CD8-positive, alpha-beta memory T cell (primary cell): ENCODE measurements at regions of chr14 and their contacts with region 1.

Region 1: GRCh38 chr14:34982417-34983147 is at the start of gene SRP54:
- DNase-seq: peak; percentile 100
- H3K4me3 ChIP-seq: peak within 1 kb of the TSS; percentile 99
- H3K4me3 Mint-ChIP-seq: no peak within 1 kb of the TSS
- H3K27ac ChIP-seq: peak within 1 kb of the TSS; percentile 98
- H3K27ac Mint-ChIP-seq: no peak within 1 kb of the TSS
- H3K4me1 ChIP-seq: peaks cover 43% of the 10 kb centered on the region
- H3K4me1 Mint-ChIP-seq: peaks cover 11 to 19% (median 14%) of the 10 kb centered on the region in 3 donors
- H3K27me3 ChIP-seq: no peaks in the 10 kb centered on the region
- H3K27me3 Mint-ChIP-seq: no peaks in the 10 kb centered on the region
- total RNA-seq, gene SRP54: 76.2 to 76.5 TPM

Region 2: GRCh38 chr14:34875031-34875922 is 107.3 kb before region 1 on chr14 and contains the start of gene BAZ1A:
- CTCF ChIA-PET with region 1: interaction called, 8 read pairs
- POLR2A ChIA-PET with region 1: interaction called, 64 read pairs
- DNase-seq: peak; percentile 24 to 64 (median 52)
- H3K4me3 ChIP-seq: peak within 1 kb of the TSS; percentile 86
- H3K4me3 Mint-ChIP-seq: peak within 1 kb of the TSS; percentile 97 to 100 (median 100)
- H3K27ac ChIP-seq: peak within 1 kb of the TSS; percentile 98
- H3K27ac Mint-ChIP-seq: peak within 1 kb of the TSS; percentile 97 to 100 (median 99)
- H3K4me1 ChIP-seq: peaks cover 15% of the 10 kb centered on the region
- H3K4me1 Mint-ChIP-seq: peaks cover 27 to 44% (median 44%) of the 10 kb centered on the region in 3 donors
- H3K27me3 ChIP-seq: no peaks in the 10 kb centered on the region
- H3K27me3 Mint-ChIP-seq: no peaks in the 10 kb centered on the region
- total RNA-seq, gene BAZ1A: 67.5 to 70.5 TPM

Region 3: GRCh38 chr14:34931206-34931605 is 51.4 kb before region 1 on chr14:
- CTCF ChIA-PET with region 1: interaction called, 4 read pairs
- POLR2A ChIA-PET with region 1: interaction called, 22 read pairs
- DNase-seq: peak in 4 of 5 donors; percentile 6 to 78 (median 73)
- H3K4me3 ChIP-seq: peak overlapping the region; percentile 39
- H3K4me3 Mint-ChIP-seq: peak overlapping the region; percentile 16 to 80 (median 58)
- H3K27ac ChIP-seq: peak overlapping the region; percentile 71
- H3K27ac Mint-ChIP-seq: peak overlapping the region; percentile 88 to 99 (median 97)
- H3K4me1 ChIP-seq: peaks cover 31% of the 10 kb centered on the region
- H3K4me1 Mint-ChIP-seq: peaks cover 24 to 37% (median 37%) of the 10 kb centered on the region in 3 donors
- H3K27me3 ChIP-seq: no peaks in the 10 kb centered on the region
- H3K27me3 Mint-ChIP-seq: peaks cover 0 to 1% of the 10 kb centered on the region in 2 donors

Region 4: GRCh38 chr14:35046048-35046741 is 63.6 kb after region 1 on chr14 and contains the start of gene FAM177A1:
- CTCF ChIA-PET with region 1: interaction called, 9 read pairs
- POLR2A ChIA-PET with region 1: interaction called, 43 read pairs
- DNase-seq: peak; percentile 99 to 100 (median 99)
- H3K4me3 ChIP-seq: peak within 1 kb of the TSS; percentile 90
- H3K4me3 Mint-ChIP-seq: peak within 1 kb of the TSS; percentile 89 to 99 (median 93)
- H3K27ac ChIP-seq: peak within 1 kb of the TSS; percentile 98
- H3K27ac Mint-ChIP-seq: peak within 1 kb of the TSS; percentile 98 to 100 (median 99)
- H3K4me1 ChIP-seq: peaks cover 21% of the 10 kb centered on the region
- H3K4me1 Mint-ChIP-seq: peaks cover 23 to 41% (median 34%) of the 10 kb centered on the region in 3 donors
- H3K27me3 ChIP-seq: no peaks in the 10 kb centered on the region
- H3K27me3 Mint-ChIP-seq: peaks cover 0 to 4% of the 10 kb centered on the region in 2 donors
- total RNA-seq, gene FAM177A1: 43.1 to 47.4 TPM

Region 5: DNA sequence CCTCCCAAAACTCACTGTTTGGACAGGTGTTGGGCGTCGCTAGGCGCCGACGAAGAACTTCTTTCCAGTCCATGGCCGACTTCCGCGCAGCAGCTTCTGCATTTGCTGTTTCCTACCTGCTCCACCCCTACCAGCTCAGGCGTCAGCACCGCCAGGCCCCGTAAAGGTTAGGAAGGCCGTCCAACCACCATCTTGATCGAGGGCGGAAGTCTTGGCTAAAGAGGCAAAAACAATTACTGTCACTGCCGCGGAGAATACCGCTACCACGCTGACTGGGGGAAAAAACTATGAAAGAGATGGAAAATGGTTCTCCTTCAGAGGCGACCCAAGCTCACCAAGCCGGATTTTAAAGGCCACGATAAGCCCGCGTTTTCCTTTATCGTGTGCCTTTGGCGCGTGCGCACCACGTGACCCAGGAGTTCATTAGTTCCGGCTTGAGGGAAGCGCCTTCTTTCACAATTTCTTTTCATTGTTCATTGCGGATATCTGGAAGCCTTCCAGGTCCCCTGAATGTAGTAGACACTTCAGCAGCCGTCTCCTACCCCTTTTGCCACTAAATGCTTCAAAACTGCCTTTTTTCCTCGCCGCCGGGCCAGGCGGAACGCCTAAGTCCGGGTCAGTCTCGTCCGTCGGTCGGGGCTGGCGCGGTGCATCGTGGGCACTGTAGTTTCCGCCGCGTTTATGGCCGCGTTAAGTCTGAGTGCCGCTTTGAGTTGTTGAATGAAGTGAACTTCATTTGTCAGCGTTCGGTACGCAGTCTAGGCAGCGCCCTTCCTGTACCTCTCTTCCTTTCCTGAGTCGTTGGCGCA is 139.5 kb after region 1 on chr14 and contains the starts of genes PPP2R3C and PRORP:
- CTCF ChIA-PET with region 1: interaction called, 5 read pairs
- POLR2A ChIA-PET with region 1: interaction called, 16 read pairs
- DNase-seq: peak; percentile 87 to 96 (median 91)
- H3K4me3 ChIP-seq: peak within 1 kb of the TSS; percentile 95
- H3K4me3 Mint-ChIP-seq: peak within 1 kb of the TSS; percentile 95 to 99 (median 98)
- H3K27ac ChIP-seq: peak within 1 kb of the TSS; percentile 99
- H3K27ac Mint-ChIP-seq: peak within 1 kb of the TSS; percentile 99 to 100 (median 100)
- H3K4me1 ChIP-seq: peaks cover 44% of the 10 kb centered on the region
- H3K4me1 Mint-ChIP-seq: peaks cover 63 to 90% (median 90%) of the 10 kb centered on the region in 3 donors
- H3K27me3 ChIP-seq: no peaks in the 10 kb centered on the region
- H3K27me3 Mint-ChIP-seq: peaks cover 0 to 4% of the 10 kb centered on the region in 2 donors
- total RNA-seq, gene PPP2R3C: 46.9 to 48.1 TPM
- total RNA-seq, gene PRORP: 36.2 to 39.9 TPM